A673 (cell line): ENCODE measurements at regions of chr2 and their contacts with region 1.

Region 1: GRCh38 chr2:222939208-222939856 is 78.5 kb downstream of the ACSL3 start:
- DNase-seq: peak; percentile 81
- H3K4me3 ChIP-seq: no peak overlapping the region
- H3K27ac ChIP-seq: no peak overlapping the region
- H3K4me1 ChIP-seq: peaks cover 14% of the 10 kb centered on the region
- H3K27me3 ChIP-seq: no peaks in the 10 kb centered on the region
- CTCF ChIP-seq: peak; percentile 89

Region 2: DNA sequence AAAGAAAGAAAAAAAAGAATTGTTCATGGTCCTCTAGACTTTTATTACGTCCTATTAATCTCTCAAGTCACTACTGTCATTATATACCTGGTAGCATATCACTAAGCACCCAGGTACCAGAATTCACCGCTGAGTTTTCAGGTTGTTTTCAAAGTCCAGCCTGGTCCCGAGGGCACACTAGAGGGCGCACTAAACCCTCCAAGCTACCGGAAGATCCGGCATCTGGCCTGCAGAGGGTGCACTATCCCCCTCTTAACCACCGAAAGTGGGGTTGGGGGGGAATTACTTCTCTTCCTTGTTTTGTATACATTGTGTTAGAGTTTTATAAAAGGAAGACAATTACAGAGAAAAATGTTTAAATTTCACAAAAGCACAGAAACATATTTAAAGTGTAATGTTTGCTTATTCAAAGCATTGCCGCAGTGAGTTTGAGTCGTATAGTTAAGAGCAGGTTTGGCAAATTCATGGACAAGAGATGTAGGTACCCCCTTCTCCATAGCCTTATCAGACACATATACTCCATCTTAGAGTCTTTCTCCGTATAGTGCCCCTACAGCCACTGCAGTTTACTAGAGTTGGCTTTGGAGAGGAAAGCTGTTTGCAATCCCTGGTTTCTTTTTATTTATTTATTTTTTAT is 248.7 kb before region 1 on chr2:
- CTCF ChIA-PET with region 1: no interaction called
- POLR2A ChIA-PET with region 1: no interaction called
- intact Hi-C with region 1: loop called (anchors 5 kb)
- DNase-seq: peak; percentile 89
- H3K4me3 ChIP-seq: no peak overlapping the region
- H3K27ac ChIP-seq: no peak overlapping the region
- H3K4me1 ChIP-seq: peaks cover 15% of the 10 kb centered on the region
- H3K27me3 ChIP-seq: no peaks in the 10 kb centered on the region
- CTCF ChIP-seq: peak; percentile 100

Region 3: GRCh38 chr2:223230352-223230751 is 291.0 kb after region 1 on chr2:
- CTCF ChIA-PET with region 1: no interaction called
- POLR2A ChIA-PET with region 1: no interaction called
- intact Hi-C with region 1: no loop called
- DNase-seq: peak; percentile 26
- H3K4me3 ChIP-seq: no peak overlapping the region
- H3K27ac ChIP-seq: no peak overlapping the region
- H3K4me1 ChIP-seq: peaks cover 35% of the 10 kb centered on the region
- H3K27me3 ChIP-seq: no peaks in the 10 kb centered on the region
- CTCF ChIP-seq: no peak